CD4-positive, alpha-beta memory T cell (primary cell): ENCODE measurements at regions of chr7 and their contacts with region 1.

Region 1: DNA sequence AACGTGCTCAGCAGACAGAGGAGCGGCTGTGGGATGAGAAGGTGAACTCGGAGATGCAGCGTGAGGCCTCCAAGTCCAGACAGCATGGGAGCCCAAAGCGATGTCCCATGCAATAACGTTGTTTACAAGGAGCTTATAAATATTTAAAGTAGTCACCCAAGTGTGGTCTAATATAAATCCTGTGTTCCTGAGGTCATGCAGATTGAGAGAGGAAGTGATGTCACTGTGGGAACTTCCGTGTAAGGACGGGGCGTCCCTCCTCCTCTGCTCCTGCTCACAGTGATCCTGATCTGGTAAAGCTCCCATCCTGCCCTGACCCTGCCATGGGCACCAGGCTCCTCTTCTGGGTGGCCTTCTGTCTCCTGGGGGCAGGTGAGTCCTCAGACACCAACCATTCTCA is 94.7 kb upstream of the PRSS58 start:
- DNase-seq: peak in 1 of 5 donors; percentile 19
- H3K4me3 ChIP-seq: peak overlapping the region in 1 of 2 donors; percentile 26
- H3K4me3 Mint-ChIP-seq: peak overlapping the region in 7 of 8 donors; percentile 63 to 83 (median 77)
- H3K27ac ChIP-seq: peak overlapping the region; percentile 38
- H3K27ac Mint-ChIP-seq: peak overlapping the region; percentile 72 to 90 (median 88)
- H3K4me1 ChIP-seq: peaks cover 34% of the 10 kb centered on the region
- H3K4me1 Mint-ChIP-seq: peaks cover 21 to 48% (median 37%) of the 10 kb centered on the region in 4 donors
- H3K27me3 ChIP-seq: no peaks in the 10 kb centered on the region
- H3K27me3 Mint-ChIP-seq: peaks cover 0 to 1% of the 10 kb centered on the region in 2 donors

Region 2: DNA sequence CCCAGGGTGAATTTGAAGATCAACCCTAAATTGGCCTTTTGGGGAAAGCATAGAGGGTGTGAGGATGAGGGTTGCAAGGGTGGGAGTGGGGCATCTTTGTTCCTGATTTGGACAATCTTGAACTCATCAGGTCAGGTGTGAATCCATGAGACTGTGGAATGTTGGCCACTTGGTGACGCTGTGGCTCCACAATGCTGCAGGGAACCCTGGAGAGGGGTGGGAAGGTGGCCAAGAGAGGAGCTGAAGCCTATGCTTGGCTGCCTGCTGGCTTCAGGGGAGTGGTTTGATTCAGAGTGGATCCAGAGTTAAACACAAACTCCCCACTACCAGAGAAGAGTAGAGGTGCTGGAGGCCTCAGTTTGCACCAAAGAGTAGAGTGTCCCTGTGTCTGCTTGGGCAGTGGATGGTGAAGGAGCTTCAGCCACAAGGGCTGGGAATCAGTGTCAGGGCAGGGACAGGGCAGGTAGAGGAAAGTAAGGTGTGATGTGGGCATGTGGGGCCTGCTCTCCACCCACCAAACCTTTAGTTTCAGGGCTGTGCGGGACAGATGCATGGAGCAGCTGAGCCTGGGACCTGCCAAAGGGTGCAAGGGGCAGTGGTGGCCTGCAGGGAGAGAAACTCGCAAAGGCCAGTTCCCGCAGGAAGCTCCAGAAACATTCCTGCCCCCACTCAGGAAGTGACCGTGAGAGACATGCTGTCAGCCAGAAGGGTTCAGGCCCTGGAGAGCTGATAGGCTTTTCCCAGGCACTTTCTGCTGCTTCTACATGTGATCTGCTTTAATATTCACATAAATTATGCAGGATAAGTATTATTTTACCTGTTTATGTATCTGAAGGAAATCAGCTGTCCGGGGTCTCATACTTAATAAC is 13.7 kb before region 1 on chr7:
- CTCF ChIA-PET with region 1: interaction called, 7 read pairs
- POLR2A ChIA-PET with region 1: interaction called, 4 read pairs
- intact Hi-C with region 1: loop called (anchors 1 kb)
- DNase-seq: no peak
- H3K4me3 ChIP-seq: no peak overlapping the region
- H3K4me3 Mint-ChIP-seq: peak overlapping the region in 2 of 8 donors; percentile 7 to 63
- H3K27ac ChIP-seq: no peak overlapping the region
- H3K27ac Mint-ChIP-seq: peak overlapping the region in 5 of 7 donors; percentile 21 to 68 (median 35)
- H3K4me1 ChIP-seq: no peaks in the 10 kb centered on the region
- H3K4me1 Mint-ChIP-seq: peaks cover 0 to 17% (median 6%) of the 10 kb centered on the region in 4 donors
- H3K27me3 ChIP-seq: no peaks in the 10 kb centered on the region
- H3K27me3 Mint-ChIP-seq: peaks cover 6 to 9% of the 10 kb centered on the region in 2 donors

Region 3: GRCh38 chr7:143948733-143949132 is 1596.2 kb after region 1 on chr7:
- CTCF ChIA-PET with region 1: no interaction called
- POLR2A ChIA-PET with region 1: no interaction called
- intact Hi-C with region 1: no loop called
- DNase-seq: no peak
- H3K4me3 ChIP-seq: no peak overlapping the region
- H3K4me3 Mint-ChIP-seq: no peak overlapping the region
- H3K27ac ChIP-seq: no peak overlapping the region
- H3K27ac Mint-ChIP-seq: no peak overlapping the region
- H3K4me1 ChIP-seq: no peaks in the 10 kb centered on the region
- H3K4me1 Mint-ChIP-seq: no peaks in the 10 kb centered on the region
- H3K27me3 ChIP-seq: no peaks in the 10 kb centered on the region
- H3K27me3 Mint-ChIP-seq: peaks cover 23 to 27% of the 10 kb centered on the region in 2 donors